Calu3 (cell line): ENCODE measurements at regions of chr6 and their contacts with region 1.

Region 1: DNA sequence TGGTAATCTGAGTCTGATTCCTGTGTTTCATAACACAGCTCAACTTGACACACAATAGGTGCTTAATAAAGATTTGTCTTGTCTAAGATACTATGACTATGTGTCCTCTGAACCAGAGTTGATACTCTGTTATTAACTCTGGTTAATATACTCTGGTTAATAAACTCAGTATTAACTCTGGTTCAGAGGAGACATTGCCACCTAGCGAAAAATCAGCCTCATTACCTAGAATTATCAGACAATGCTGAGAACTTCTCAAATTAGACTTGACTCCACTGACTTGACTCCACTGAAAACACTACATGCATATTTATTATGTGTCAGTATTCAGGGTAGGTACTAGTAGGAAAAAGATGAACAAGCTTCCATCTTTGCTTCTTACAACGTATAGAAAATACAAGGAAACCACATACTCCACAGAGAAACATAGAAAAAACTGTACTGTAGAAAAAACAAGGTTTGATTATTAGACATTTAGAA is 73.9 kb downstream of the AHI1 start:
- DNase-seq: peak; percentile 2
- H3K4me3 Mint-ChIP-seq: no peak overlapping the region
- H3K27ac Mint-ChIP-seq: no peak overlapping the region
- H3K4me1 Mint-ChIP-seq: no peaks in the 10 kb centered on the region
- H3K27me3 Mint-ChIP-seq: no peaks in the 10 kb centered on the region
- CTCF ChIP-seq: peak; percentile 27

Region 2: GRCh38 chr6:135145063-135145800 is 278.5 kb before region 1 on chr6:
- CTCF ChIA-PET with region 1: interaction called, 3 read pairs
- intact Hi-C with region 1: loop called (anchors 1 kb)
- DNase-seq: peak; percentile 30
- H3K4me3 Mint-ChIP-seq: no peak overlapping the region
- H3K27ac Mint-ChIP-seq: no peak overlapping the region
- H3K4me1 Mint-ChIP-seq: peaks cover 8% of the 10 kb centered on the region
- H3K27me3 Mint-ChIP-seq: peaks cover 13% of the 10 kb centered on the region
- CTCF ChIP-seq: no peak

Region 3: GRCh38 chr6:135226537-135226936 is 197.2 kb before region 1 on chr6:
- CTCF ChIA-PET with region 1: no interaction called
- intact Hi-C with region 1: no loop called
- DNase-seq: no peak
- H3K4me3 Mint-ChIP-seq: no peak overlapping the region
- H3K27ac Mint-ChIP-seq: no peak overlapping the region
- H3K4me1 Mint-ChIP-seq: no peaks in the 10 kb centered on the region
- H3K27me3 Mint-ChIP-seq: no peaks in the 10 kb centered on the region
- CTCF ChIP-seq: no peak